ENCODE measurements at regions of chr15 and their contacts with region 1.

Region 1: GRCh38 chr15:31079519-31079918 is 22.0 kb downstream of the TRPM1 start:
- DNase-seq: no peak
- ATAC-seq: no peak
- H3K4me3 ChIP-seq: no peak overlapping the region
- H3K27ac ChIP-seq: no peak overlapping the region
- H3K4me1 ChIP-seq: peaks cover 3 to 8% of the 10 kb centered on the region in 2 experiments; a peak in 3 of 5 replicates
- H3K27me3 ChIP-seq: peaks cover 15 to 46% of the 10 kb centered on the region in 2 experiments; a peak in 4 of 5 replicates
- CTCF ChIP-seq: no peak
- EP300 ChIP-seq: no peak
- POLR2A ChIP-seq: no peak
- RAD21 ChIP-seq: no peak

Region 2: DNA sequence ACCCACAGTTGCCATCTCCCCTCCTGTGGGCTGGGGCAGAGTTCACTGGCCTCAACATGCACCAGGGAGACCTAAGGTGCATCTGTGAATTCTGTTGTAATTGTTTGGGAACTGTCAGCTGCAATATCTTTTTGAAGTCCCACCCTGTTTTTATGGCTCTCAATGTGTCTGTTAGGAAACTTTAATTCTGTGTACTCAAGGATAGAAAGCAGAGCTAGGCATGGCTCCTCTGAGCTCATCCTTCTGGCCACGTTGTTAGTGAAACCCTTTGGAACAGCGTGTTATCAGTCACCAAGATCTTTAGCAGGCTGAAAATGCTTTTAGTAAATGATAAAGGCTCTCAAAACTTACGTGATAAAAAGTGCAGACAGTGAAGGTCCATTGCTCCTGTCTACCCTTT is 54.5 kb before region 1 on chr15:
- CTCF ChIA-PET with region 1: no interaction called
- POLR2A ChIA-PET with region 1: no interaction called
- in situ Hi-C with region 1: no loop called
- intact Hi-C with region 1: loop called (anchors 5 kb)
- DNase-seq: no peak
- ATAC-seq: no peak
- H3K4me3 ChIP-seq: no peak overlapping the region
- H3K27ac ChIP-seq: no peak overlapping the region
- H3K4me1 ChIP-seq: peaks cover 0 to 4% of the 10 kb centered on the region in 2 experiments; a peak in 3 of 5 replicates
- H3K27me3 ChIP-seq: peaks cover 8 to 12% of the 10 kb centered on the region in 2 experiments; a peak in 1 of 5 replicates
- CTCF ChIP-seq: no peak
- EP300 ChIP-seq: no peak
- POLR2A ChIP-seq: no peak
- RAD21 ChIP-seq: no peak

Measured in K562 (cell line).